ENCODE measurements at regions of chr2 and their contacts with region 1.

Region 1: GRCh38 chr2:113068718-113069435 is 1.1 kb downstream of the IL1F10 start:
- DNase-seq: peak; percentile 59 to 96
- H3K4me3 ChIP-seq: no peak overlapping the region; the same call in 1 of the 2 replicates
- H3K27ac ChIP-seq: peak overlapping the region; percentile 87
- H3K4me1 ChIP-seq: peaks cover 52% of the 10 kb centered on the region
- H3K27me3 ChIP-seq: no peaks in the 10 kb centered on the region
- CTCF ChIP-seq: no peak

Region 2: GRCh38 chr2:112048887-112049286 is 1020.0 kb before region 1 on chr2:
- CTCF ChIA-PET with region 1: no interaction called
- POLR2A ChIA-PET with region 1: interaction called, 24 read pairs
- intact Hi-C with region 1: no loop called
- DNase-seq: peak; percentile 33 to 68
- H3K4me3 ChIP-seq: no peak overlapping the region
- H3K27ac ChIP-seq: no peak overlapping the region
- H3K4me1 ChIP-seq: peaks cover 7% of the 10 kb centered on the region
- H3K27me3 ChIP-seq: no peaks in the 10 kb centered on the region
- CTCF ChIP-seq: peak; percentile 89

Region 3: GRCh38 chr2:112698834-112699515 is 369.9 kb before region 1 on chr2:
- CTCF ChIA-PET with region 1: no interaction called
- POLR2A ChIA-PET with region 1: interaction called, 16 read pairs
- intact Hi-C with region 1: no loop called
- DNase-seq: no peak
- H3K4me3 ChIP-seq: no peak overlapping the region
- H3K27ac ChIP-seq: no peak overlapping the region
- H3K4me1 ChIP-seq: no peaks in the 10 kb centered on the region
- H3K27me3 ChIP-seq: no peaks in the 10 kb centered on the region
- CTCF ChIP-seq: no peak

Region 4: GRCh38 chr2:113273027-113273551 is 204.2 kb after region 1 on chr2:
- CTCF ChIA-PET with region 1: no interaction called
- POLR2A ChIA-PET with region 1: no interaction called
- intact Hi-C with region 1: no loop called
- DNase-seq: no peak
- H3K4me3 ChIP-seq: no peak overlapping the region
- H3K27ac ChIP-seq: no peak overlapping the region
- H3K4me1 ChIP-seq: no peaks in the 10 kb centered on the region
- H3K27me3 ChIP-seq: no peaks in the 10 kb centered on the region
- CTCF ChIP-seq: no peak

Region 5: GRCh38 chr2:114156366-114157056 is 1087.6 kb after region 1 on chr2:
- CTCF ChIA-PET with region 1: no interaction called
- POLR2A ChIA-PET with region 1: no interaction called
- intact Hi-C with region 1: no loop called
- DNase-seq: no peak
- H3K4me3 ChIP-seq: no peak overlapping the region
- H3K27ac ChIP-seq: no peak overlapping the region
- H3K4me1 ChIP-seq: no peaks in the 10 kb centered on the region
- H3K27me3 ChIP-seq: no peaks in the 10 kb centered on the region
- CTCF ChIP-seq: no peak